ENCODE measurements at regions of chr16 and their contacts with region 1.

Region 1: DNA sequence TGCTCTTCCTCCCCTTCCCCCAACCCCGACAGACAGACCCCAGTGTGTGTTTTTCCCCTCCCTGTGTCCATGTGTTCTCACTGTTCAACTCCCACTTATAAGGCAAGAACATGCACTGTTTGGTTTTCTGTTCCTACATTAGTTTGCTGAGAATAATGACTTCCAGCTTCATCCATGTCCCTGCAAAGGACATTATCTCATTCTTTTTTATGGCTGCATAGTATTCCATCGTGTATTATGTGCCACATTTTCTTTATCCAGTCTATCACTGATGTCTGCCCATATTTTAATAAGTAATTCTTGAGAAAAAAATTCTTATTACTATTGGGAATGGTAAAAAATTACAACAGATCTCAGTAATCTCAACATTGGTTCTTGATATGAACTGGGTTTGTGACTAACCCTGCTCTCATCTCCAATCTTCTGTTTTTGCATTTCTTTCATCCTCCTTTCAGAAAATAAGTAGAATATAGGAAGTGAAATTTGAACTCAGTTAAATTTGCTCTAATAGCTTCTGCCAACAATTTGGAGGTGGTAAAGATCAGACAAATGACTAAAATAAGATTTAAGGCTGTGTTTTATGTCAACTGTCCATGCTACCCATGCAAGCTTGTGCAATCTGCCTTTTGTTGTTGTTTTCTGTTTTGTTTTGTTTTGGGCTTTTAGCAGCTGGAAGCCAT is 11.1 kb downstream of the MARF1 start:
- DNase-seq: no peak
- ATAC-seq: no peak
- H3K4me3 ChIP-seq: no peak overlapping the region
- H3K4me3 Mint-ChIP-seq: no peak overlapping the region
- H3K27ac ChIP-seq: no peak overlapping the region
- H3K27ac Mint-ChIP-seq: peak overlapping the region; percentile 9
- H3K4me1 ChIP-seq: peaks cover 14% of the 10 kb centered on the region
- H3K4me1 Mint-ChIP-seq: peaks cover 44% of the 10 kb centered on the region
- H3K27me3 ChIP-seq: no peaks in the 10 kb centered on the region
- H3K27me3 Mint-ChIP-seq: no peaks in the 10 kb centered on the region
- CTCF ChIP-seq: no peak

Region 2: DNA sequence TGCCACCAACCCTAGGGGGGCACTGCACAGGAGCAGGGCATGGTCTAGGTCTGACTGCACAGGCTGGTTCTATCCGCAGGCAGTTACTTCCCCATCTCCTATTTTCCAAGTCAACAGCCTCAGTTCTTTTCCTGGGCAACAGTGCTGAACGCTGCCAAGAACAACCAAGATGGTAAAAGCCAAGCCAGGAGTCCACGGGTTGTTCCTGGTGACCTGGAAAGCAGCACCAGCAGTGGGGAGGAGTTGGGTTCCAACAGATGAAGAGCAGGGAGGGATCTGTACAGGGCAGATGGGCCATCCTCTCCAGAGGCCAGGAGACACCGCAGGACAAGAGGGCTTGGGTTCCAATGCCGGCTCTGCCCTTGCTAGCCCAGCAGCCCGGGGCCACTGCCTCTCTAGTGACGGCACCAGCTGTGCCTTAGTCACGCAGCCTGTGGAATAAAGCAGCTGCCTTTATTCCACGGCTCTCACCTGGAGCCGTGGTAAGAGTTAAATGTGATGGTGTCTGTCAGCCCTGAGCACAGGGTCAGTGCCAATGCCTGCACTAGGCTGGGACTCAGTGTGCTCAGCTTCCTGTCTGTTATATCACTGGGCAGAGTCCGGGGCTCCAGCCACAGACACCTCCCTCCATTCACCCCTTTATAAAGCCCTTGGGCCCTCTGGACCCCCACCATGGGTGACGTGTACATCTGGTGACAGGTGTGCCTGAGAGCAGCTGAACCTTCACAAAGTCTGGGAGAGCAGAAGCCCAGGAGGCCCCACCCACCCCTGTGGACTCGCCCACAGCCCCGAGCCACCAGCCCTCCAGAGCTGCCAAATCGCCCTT is 33.8 kb before region 1 on chr16:
- CTCF ChIA-PET with region 1: no interaction called
- POLR2A ChIA-PET with region 1: no interaction called
- intact Hi-C with region 1: loop called in 1 of 2 experiments (anchors 5 kb)
- DNase-seq: no peak
- ATAC-seq: no peak
- H3K4me3 ChIP-seq: no peak overlapping the region
- H3K4me3 Mint-ChIP-seq: no peak overlapping the region
- H3K27ac ChIP-seq: no peak overlapping the region
- H3K27ac Mint-ChIP-seq: no peak overlapping the region
- H3K4me1 ChIP-seq: no peaks in the 10 kb centered on the region
- H3K4me1 Mint-ChIP-seq: peaks cover 11% of the 10 kb centered on the region
- H3K27me3 ChIP-seq: no peaks in the 10 kb centered on the region
- H3K27me3 Mint-ChIP-seq: no peaks in the 10 kb centered on the region
- CTCF ChIP-seq: no peak

Region 3: GRCh38 chr16:16007743-16008111 is 375.9 kb after region 1 on chr16:
- CTCF ChIA-PET with region 1: no interaction called
- POLR2A ChIA-PET with region 1: no interaction called
- intact Hi-C with region 1: no loop called
- DNase-seq: no peak
- ATAC-seq: no peak
- H3K4me3 ChIP-seq: no peak overlapping the region
- H3K4me3 Mint-ChIP-seq: no peak overlapping the region
- H3K27ac ChIP-seq: no peak overlapping the region
- H3K27ac Mint-ChIP-seq: peak overlapping the region; percentile 46
- H3K4me1 ChIP-seq: peaks cover 9% of the 10 kb centered on the region
- H3K4me1 Mint-ChIP-seq: peaks cover 23% of the 10 kb centered on the region
- H3K27me3 ChIP-seq: no peaks in the 10 kb centered on the region
- H3K27me3 Mint-ChIP-seq: no peaks in the 10 kb centered on the region
- CTCF ChIP-seq: no peak